ENCODE measurements at regions of chr12 and their contacts with region 1.

Region 1: DNA sequence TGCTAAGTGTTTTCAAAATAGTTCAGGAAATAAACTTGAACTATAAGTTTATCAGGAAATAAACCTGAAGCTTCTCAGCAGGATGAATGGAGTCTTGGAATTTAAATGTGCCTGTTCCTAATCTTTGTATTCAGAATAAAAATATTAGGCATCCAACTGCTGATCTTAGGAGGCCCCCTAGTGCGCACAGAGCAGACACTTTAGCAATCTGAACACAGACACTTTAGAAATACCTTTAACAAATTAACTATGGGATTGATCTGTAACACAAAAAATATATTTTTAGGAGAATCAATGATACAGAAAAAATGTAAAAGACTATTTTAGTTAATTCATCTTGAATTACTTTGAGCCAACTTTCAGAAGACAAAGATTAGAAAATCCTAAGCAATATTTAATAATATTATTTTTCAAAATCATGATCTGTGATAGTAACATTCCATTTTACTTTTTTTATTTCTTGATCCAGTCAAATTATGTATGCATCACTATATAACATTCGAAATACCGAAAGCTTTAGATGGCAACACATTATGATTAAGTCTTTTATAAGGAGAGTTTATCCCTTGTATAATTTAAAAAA is 80.9 kb downstream of the SLC41A2 start:
- DNase-seq: peak in 1 of 2 donors; percentile 52
- H3K4me3 ChIP-seq: no peak overlapping the region
- H3K27ac ChIP-seq: no peak overlapping the region
- H3K4me1 ChIP-seq: peaks cover 0 to 11% (median 0%) of the 10 kb centered on the region in 4 donors
- H3K27me3 ChIP-seq: no peaks in the 10 kb centered on the region
- CTCF ChIP-seq: peak; percentile 69 to 77

Region 2: DNA sequence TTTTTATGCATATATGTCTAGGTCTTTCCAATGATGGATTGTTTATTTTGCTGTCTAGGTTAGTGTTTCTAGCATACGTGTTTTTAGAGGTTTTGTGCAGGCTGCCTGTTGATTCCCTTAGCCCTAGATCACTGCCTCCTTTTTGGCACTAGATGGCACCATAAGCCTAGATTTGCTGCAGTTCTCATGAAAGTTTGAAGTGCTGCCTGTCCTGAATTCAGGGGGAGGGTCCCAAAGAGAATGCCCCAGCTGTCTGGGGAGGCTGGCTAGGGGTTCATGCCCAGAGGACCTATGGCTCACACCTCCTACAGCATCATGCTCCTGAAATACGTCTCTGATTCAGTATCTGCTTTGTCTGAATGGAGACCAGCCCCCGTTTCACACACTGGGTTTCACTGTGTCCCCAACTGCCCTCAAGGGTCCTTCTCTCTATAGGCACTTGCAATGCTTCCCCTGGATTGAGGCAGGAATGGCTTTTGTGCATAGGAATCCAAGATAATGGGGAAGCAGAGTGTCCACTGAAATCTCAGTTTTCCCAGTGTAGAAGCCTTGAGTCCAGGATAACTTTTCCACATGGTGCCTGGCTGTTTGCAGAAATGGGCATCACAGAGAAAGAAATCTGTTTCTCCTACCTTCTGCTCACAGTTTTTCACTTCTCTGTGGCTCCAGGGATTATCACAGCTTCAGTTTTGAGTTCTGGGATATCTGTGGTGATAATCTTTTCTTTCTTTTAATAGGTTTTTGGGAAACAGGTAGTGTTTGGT is 675.8 kb before region 1 on chr12:
- intact Hi-C with region 1: loop called (anchors 10 kb)
- DNase-seq: peak in 1 of 2 donors; percentile 37
- H3K4me3 ChIP-seq: no peak overlapping the region
- H3K27ac ChIP-seq: no peak overlapping the region
- H3K4me1 ChIP-seq: peaks cover 0 to 16% (median 7%) of the 10 kb centered on the region in 4 donors
- H3K27me3 ChIP-seq: no peaks in the 10 kb centered on the region
- CTCF ChIP-seq: peak; percentile 79 to 81

Region 3: GRCh38 chr12:104381731-104382480 is 495.3 kb before region 1 on chr12:
- intact Hi-C with region 1: loop called (anchors 2 kb)
- DNase-seq: peak; percentile 76 to 85
- H3K4me3 ChIP-seq: peak overlapping the region in 1 of 2 donors; percentile 11
- H3K27ac ChIP-seq: no peak overlapping the region
- H3K4me1 ChIP-seq: peaks cover 0 to 9% (median 4%) of the 10 kb centered on the region in 4 donors
- H3K27me3 ChIP-seq: no peaks in the 10 kb centered on the region
- CTCF ChIP-seq: peak; percentile 91 to 97

Region 4: GRCh38 chr12:104456417-104456949 is 420.7 kb before region 1 on chr12 and contains the start of gene CHST11:
- intact Hi-C with region 1: loop called (anchors 5 kb)
- DNase-seq: peak; percentile 85 to 92
- H3K4me3 ChIP-seq: peak within 1 kb of the TSS; percentile 59 to 72
- H3K27ac ChIP-seq: peak within 1 kb of the TSS; percentile 79 to 81
- H3K4me1 ChIP-seq: peaks cover 0 to 14% (median 6%) of the 10 kb centered on the region in 4 donors
- H3K27me3 ChIP-seq: no peaks in the 10 kb centered on the region
- CTCF ChIP-seq: peak; percentile 51 to 52

Region 5: DNA sequence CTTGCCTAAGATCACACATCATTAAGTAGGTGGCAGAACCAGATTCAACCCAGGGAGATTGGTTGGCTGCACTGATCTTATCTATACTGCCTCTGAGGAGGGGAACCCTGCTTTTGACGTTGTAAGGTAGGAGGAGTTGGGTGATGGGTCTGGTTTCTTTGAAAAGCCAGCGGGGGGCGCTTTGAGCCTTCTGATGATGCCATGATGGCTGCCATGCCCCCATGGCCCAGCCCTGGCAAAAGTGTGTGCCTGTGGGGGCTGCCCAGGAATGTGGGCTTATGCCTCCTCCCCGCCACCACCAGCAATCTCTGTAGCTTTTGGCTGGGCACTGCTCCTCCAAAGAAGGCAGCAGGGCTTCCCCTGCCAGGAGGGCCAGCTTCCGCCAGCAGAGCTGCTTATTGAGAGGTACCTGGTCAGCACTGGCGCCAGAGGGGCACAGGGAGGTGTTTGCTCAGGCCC is 143.5 kb before region 1 on chr12:
- intact Hi-C with region 1: no loop called
- DNase-seq: peak in 1 of 2 donors; percentile 75
- H3K4me3 ChIP-seq: no peak overlapping the region
- H3K27ac ChIP-seq: no peak overlapping the region
- H3K4me1 ChIP-seq: peaks cover 0 to 32% (median 23%) of the 10 kb centered on the region in 4 donors
- H3K27me3 ChIP-seq: no peaks in the 10 kb centered on the region
- CTCF ChIP-seq: peak; percentile 27 to 38

Region 6: GRCh38 chr12:104925501-104925900 is 48.3 kb after region 1 on chr12:
- intact Hi-C with region 1: no loop called
- DNase-seq: no peak
- H3K4me3 ChIP-seq: no peak overlapping the region
- H3K27ac ChIP-seq: no peak overlapping the region
- H3K4me1 ChIP-seq: peaks cover 0 to 26% (median 6%) of the 10 kb centered on the region in 4 donors
- H3K27me3 ChIP-seq: no peaks in the 10 kb centered on the region
- CTCF ChIP-seq: no peak

Region 7: GRCh38 chr12:105064564-105065178 is 187.5 kb after region 1 on chr12:
- intact Hi-C with region 1: no loop called
- DNase-seq: no peak
- H3K4me3 ChIP-seq: no peak overlapping the region
- H3K27ac ChIP-seq: no peak overlapping the region
- H3K4me1 ChIP-seq: no peaks in the 10 kb centered on the region
- H3K27me3 ChIP-seq: no peaks in the 10 kb centered on the region
- CTCF ChIP-seq: no peak